ENCODE measurements at regions of chr1 and their contacts with region 1.

Region 1: DNA sequence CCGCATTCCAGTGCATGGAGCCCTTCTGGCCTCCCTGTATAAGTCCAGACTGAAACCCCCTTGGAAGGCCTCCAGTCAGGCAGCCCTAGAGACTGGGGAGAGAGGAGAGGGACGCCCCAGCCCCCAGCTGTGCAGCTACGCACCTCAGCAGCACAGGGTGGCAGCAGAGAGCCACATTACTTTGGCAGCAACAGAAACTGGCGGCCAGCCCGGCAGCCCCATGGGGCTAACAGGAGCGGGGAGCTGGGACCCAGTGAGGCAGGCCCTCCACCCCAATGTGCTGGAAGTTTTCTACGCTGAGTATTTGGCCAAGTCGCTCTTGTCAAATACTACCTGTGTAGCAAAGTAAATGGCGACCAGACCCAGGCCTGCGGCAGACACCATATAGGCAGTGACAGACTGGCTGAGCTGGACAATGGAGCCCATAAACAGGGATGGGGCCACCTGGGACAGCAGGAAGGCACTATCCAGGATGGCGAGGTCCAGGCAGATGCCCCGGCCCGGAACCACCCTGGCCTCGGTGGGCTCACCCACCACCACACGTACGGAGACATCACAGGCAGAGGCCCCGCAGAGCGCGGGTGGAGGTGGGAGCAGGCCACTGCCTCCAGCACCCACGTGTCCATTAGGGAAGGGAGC is 21.2 kb downstream of the SLC45A3 start:
- DNase-seq: peak; percentile 56 to 87
- ATAC-seq: peak; percentile 85 to 94
- H3K4me3 ChIP-seq: no peak overlapping the region
- H3K27ac ChIP-seq: no peak overlapping the region
- H3K4me1 ChIP-seq: no peaks in the 10 kb centered on the region
- CTCF ChIP-seq: peak; percentile 79
- EP300 ChIP-seq: no peak
- POLR2A ChIP-seq: no peak
- RAD21 ChIP-seq: peak; percentile 83 to 88

Region 2: DNA sequence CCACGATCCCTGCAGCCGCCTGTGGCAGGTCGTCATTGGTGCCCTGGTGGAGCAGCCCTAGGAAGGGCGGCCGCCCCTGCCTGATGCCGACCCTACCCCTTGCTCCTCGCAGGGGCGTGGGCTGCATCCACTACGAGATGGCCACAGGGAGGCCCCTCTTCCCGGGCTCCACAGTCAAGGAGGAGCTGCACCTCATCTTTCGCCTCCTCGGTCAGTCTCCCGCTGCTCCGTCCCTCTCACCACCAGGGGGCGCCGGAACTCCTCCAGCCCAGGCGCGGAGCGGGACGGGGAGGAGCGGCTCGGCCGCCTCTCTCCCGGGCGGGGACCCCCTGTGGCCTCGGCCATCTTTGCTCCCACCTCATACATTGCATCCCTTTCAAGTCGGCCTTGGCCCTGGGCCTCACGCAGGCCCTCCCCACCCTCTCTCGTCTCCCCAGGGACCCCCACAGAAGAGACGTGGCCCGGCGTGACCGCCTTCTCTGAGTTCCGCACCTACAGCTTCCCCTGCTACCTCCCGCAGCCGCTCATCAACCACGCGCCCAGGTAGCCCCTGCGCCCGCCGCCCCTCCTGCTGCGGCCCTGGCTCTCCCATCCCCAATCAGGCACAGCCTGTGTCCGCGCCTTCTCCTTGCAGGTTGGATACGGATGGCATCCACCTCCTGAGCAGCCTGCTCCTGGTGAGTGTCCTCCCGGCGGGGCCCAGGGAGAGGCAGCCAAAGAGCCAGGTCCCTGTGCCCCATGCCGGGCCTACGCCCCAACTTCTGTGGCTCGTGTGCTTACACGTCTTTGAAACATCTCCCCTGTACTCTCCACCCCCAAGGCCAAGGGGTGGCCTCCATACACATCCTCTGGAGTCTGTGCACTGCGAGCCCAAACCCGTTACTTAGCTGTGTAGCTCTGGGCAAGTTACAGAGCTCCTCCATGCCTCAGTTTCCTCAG is 129.9 kb before region 1 on chr1:
- CTCF ChIA-PET with region 1: interaction called, 154 read pairs
- POLR2A ChIA-PET with region 1: no interaction called
- DNase-seq: peak; percentile 66 to 88
- ATAC-seq: peak; percentile 78 to 93
- H3K4me3 ChIP-seq: peak overlapping the region; percentile 42
- H3K27ac ChIP-seq: peak overlapping the region; percentile 42 to 77; a peak in 4 of 6 replicates
- H3K4me1 ChIP-seq: 0 out of 3 replicates have a peak, but pooled peaks cover 3% of the 10 kb centered on the region
- CTCF ChIP-seq: peak; percentile 90
- EP300 ChIP-seq: no peak
- POLR2A ChIP-seq: no peak
- RAD21 ChIP-seq: peak; percentile 82 to 85

Region 3: GRCh38 chr1:205543411-205544301 is 115.4 kb before region 1 on chr1:
- CTCF ChIA-PET with region 1: interaction called, 25 read pairs
- POLR2A ChIA-PET with region 1: no interaction called
- DNase-seq: peak in 1 of 2 experiments; percentile 63
- ATAC-seq: peak; percentile 62 to 78
- H3K4me3 ChIP-seq: peak overlapping the region; percentile 29; the same call in 1 of the 3 replicates
- H3K27ac ChIP-seq: peak overlapping the region; percentile 12 to 65; a peak in 3 of 6 replicates
- H3K4me1 ChIP-seq: peaks cover 9% of the 10 kb centered on the region; the same call in 2 of the 3 replicates
- CTCF ChIP-seq: no peak
- EP300 ChIP-seq: no peak
- POLR2A ChIP-seq: no peak
- RAD21 ChIP-seq: no peak

Region 4: GRCh38 chr1:205600085-205600484 is 59.0 kb before region 1 on chr1:
- CTCF ChIA-PET with region 1: interaction called, 423 read pairs
- POLR2A ChIA-PET with region 1: no interaction called
- DNase-seq: no peak
- ATAC-seq: peak; percentile 31 to 58; a peak in 3 of 6 replicates
- H3K4me3 ChIP-seq: no peak overlapping the region
- H3K27ac ChIP-seq: no peak overlapping the region
- H3K4me1 ChIP-seq: no peaks in the 10 kb centered on the region
- CTCF ChIP-seq: no peak
- EP300 ChIP-seq: no peak
- POLR2A ChIP-seq: no peak
- RAD21 ChIP-seq: no peak

Region 5: GRCh38 chr1:205680073-205680851 is 21.2 kb after region 1 on chr1 and contains the start of gene SLC45A3:
- CTCF ChIA-PET with region 1: interaction called, 117 read pairs
- POLR2A ChIA-PET with region 1: no interaction called
- DNase-seq: peak; percentile 23 to 69
- ATAC-seq: peak; percentile 79 to 85
- H3K4me3 ChIP-seq: peak within 1 kb of the TSS; percentile 85
- H3K27ac ChIP-seq: peak within 1 kb of the TSS; percentile 76 to 94
- H3K4me1 ChIP-seq: peaks cover 8% of the 10 kb centered on the region
- CTCF ChIP-seq: no peak
- EP300 ChIP-seq: no peak
- POLR2A ChIP-seq: no peak
- RAD21 ChIP-seq: no peak
- polyA plus RNA-seq, gene SLC45A3: 2.8 and 3.0 TPM in 2 replicates

Region 6: DNA sequence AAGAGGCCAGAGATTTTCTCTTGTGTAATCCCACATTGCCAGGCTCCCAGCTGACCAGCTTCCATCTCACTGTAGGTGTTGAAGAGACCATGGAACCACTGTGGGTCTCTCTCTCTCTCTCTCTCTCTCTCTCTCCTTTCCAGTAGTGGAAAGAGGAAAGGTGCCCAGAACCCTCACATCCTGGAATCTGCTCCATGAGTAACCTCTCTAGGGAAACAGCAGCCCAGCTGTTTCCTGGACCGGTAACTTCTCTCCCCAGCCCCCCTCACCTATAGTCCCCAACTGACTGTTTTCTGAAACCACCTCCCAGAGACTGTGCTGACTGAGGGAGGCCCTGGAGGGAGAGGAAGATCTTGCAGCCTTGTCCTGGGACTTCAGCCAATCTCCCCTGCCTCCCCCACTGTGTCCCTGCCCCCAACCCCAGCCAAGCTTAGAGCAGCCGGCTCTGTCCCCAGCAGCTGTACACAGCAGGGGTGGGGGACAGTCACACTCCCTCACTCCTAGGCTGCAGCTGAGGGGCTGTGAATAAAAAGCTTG is 41.9 kb after region 1 on chr1:
- CTCF ChIA-PET with region 1: interaction called, 30 read pairs
- POLR2A ChIA-PET with region 1: no interaction called
- DNase-seq: no peak
- ATAC-seq: peak in 1 of 2 experiments; percentile 9; a peak in 3 of 6 replicates
- H3K4me3 ChIP-seq: no peak overlapping the region
- H3K27ac ChIP-seq: no peak overlapping the region
- H3K4me1 ChIP-seq: no peaks in the 10 kb centered on the region
- CTCF ChIP-seq: no peak
- EP300 ChIP-seq: no peak
- POLR2A ChIP-seq: no peak
- RAD21 ChIP-seq: no peak

Region 7: DNA sequence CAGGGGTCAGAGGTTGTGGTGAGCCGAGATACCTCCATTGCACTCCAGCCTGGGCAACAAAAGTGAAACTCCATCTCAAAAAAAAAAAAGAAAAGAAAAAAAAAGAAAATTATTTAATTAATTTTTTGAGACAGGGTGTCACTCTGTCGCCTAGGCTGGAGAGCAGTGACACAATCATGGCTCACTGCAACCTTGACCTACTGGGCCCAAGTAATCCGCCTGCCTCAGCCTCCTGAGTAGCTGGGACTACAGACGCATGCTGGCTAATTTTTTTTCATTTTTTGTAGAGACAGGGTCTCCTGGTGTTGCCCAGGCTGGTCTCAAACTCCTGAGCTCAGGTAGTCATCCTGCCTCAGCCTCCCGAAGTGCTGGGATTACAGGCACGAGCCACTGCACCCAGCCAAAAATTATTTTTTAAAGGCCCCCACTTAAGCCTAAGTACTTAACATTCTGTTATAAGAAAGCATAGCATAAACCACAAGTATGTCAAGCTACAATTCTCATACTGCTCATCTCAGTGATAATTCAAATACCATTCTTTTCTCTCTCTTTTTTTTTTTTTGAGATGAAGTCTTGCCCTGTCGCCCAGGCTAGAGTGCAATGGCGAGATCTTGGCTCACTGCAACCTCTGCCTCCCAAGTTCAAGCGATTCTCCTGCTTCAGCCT is 71.0 kb after region 1 on chr1:
- CTCF ChIA-PET with region 1: interaction called, 14 read pairs
- POLR2A ChIA-PET with region 1: no interaction called
- DNase-seq: no peak
- ATAC-seq: no peak; a peak in 1 of 6 replicates
- H3K4me3 ChIP-seq: no peak overlapping the region
- H3K27ac ChIP-seq: no peak overlapping the region
- H3K4me1 ChIP-seq: peaks cover 33% of the 10 kb centered on the region
- CTCF ChIP-seq: no peak
- EP300 ChIP-seq: no peak
- POLR2A ChIP-seq: no peak
- RAD21 ChIP-seq: no peak